ENCODE measurements at regions of chr20 and their contacts with region 1.

Region 1: DNA sequence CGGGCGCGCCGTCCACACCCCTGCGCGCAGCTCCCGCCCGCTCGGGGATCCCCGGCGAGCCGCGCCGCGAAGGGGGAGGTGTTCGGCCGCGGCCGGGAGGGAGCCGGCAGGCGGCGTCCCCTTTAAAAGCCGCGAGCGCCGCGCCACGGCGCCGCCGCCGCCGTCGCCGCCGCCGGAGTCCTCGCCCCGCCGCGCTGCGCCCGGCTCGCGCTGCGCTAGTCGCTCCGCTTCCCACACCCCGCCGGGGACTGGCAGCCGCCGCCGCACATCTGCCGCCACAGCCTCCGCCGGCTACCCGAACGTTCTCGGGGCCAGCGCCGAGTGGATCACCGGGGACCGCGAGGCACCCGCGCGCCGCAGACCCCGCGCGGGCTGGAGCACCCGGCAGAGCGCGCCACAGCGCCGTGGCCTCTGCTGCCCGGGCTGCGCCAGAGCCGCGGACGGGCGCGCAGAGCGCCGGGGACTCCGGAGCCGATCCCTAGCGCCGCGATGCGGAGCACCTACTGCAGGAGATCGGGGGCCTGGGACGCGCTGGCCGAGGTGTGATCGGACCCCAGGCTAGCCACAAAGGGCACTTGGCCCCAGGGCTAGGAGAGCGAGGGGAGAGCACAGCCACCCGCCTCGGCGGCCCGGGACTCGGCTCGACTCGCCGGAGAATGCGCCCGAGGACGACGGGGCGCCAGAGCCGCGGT is at the start of gene BMP2:
- DNase-seq: peak in 1 of 2 experiments; percentile 78
- H3K4me3 ChIP-seq: peak within 1 kb of the TSS; percentile 55 to 79 (median 72)
- H3K27ac ChIP-seq: no peak within 1 kb of the TSS
- H3K4me1 ChIP-seq: peaks cover 5 to 22% (median 14%) of the 10 kb centered on the region in 4 experiments; a peak in 6 of 7 replicates
- H3K27me3 ChIP-seq: peaks cover 3 to 36% (median 26%) of the 10 kb centered on the region in 4 experiments
- CTCF ChIP-seq: no peak
- EP300 ChIP-seq: no peak
- POLR2A ChIP-seq: no peak
- RAD21 ChIP-seq: peak in 1 of 2 experiments; percentile 14; a peak in 1 of 4 replicates
- total RNA-seq, gene BMP2: 3.6 and 4.0 TPM in 2 replicates

Region 2: GRCh38 chr20:6623989-6624388 is 143.7 kb before region 1 on chr20:
- CTCF ChIA-PET with region 1: interaction called, 17 read pairs
- POLR2A ChIA-PET with region 1: no interaction called
- DNase-seq: no peak
- H3K4me3 ChIP-seq: no peak overlapping the region
- H3K27ac ChIP-seq: no peak overlapping the region
- H3K4me1 ChIP-seq: peaks cover 0 to 3% (median 0%) of the 10 kb centered on the region in 4 experiments; a peak in 1 of 7 replicates
- H3K27me3 ChIP-seq: no peaks in the 10 kb centered on the region
- CTCF ChIP-seq: no peak
- EP300 ChIP-seq: no peak
- POLR2A ChIP-seq: no peak
- RAD21 ChIP-seq: no peak

Region 3: DNA sequence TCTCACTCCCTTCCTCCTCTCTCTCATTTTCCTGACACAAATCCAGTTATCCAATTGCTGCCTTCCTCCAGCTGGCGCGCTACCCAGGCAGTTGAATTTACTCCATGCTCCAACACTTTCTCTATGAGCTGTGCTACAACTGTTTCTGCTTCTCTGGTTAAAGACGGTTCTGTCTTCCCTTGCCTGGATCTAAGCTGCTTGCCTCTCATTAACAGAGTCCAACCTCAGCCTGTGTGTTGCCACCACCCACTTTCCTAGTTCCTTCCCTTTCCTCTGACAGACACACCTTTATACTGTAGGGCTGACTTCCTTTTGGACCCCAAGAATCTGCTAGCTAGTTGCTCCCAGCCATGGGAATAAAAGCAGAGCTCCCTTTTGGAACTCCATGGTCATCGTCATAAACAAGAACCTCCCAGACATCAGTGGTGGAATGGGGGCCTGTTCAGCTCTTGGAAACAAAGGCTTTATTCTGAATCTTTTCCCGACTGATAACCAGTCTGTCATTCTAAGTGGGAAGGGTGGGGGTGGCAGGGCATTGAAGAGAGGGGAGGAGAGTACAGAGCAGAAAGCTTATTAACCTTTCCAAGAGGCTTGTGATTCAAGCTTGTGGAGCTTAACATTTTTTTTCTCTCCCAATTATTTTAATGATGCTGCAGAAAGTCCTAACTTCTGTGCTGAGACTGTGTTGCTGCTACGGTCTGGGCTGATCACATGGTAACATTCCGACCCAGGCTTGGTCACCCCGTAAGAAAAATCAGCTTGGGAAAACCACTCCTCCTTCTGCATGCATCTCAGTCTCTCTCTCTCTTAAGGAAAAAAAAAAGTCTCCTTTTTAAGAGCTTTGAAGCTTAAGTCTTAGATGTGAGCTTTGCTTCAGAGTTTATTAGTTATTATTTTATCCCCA is 31.5 kb before region 1 on chr20:
- CTCF ChIA-PET with region 1: interaction called, 10 read pairs
- POLR2A ChIA-PET with region 1: no interaction called
- DNase-seq: no peak
- H3K4me3 ChIP-seq: no peak overlapping the region
- H3K27ac ChIP-seq: no peak overlapping the region
- H3K4me1 ChIP-seq: no peaks in the 10 kb centered on the region
- H3K27me3 ChIP-seq: no peaks in the 10 kb centered on the region
- CTCF ChIP-seq: no peak
- EP300 ChIP-seq: no peak
- POLR2A ChIP-seq: no peak
- RAD21 ChIP-seq: no peak

Region 4: GRCh38 chr20:6784767-6785166 is 17.1 kb after region 1 on chr20:
- CTCF ChIA-PET with region 1: interaction called, 11 read pairs
- POLR2A ChIA-PET with region 1: interaction called, 5 read pairs
- DNase-seq: no peak
- H3K4me3 ChIP-seq: no peak overlapping the region
- H3K27ac ChIP-seq: no peak overlapping the region
- H3K4me1 ChIP-seq: no peaks in the 10 kb centered on the region; a peak in 2 of 7 replicates
- H3K27me3 ChIP-seq: no peaks in the 10 kb centered on the region
- CTCF ChIP-seq: no peak
- EP300 ChIP-seq: no peak
- POLR2A ChIP-seq: no peak
- RAD21 ChIP-seq: no peak

Region 5: DNA sequence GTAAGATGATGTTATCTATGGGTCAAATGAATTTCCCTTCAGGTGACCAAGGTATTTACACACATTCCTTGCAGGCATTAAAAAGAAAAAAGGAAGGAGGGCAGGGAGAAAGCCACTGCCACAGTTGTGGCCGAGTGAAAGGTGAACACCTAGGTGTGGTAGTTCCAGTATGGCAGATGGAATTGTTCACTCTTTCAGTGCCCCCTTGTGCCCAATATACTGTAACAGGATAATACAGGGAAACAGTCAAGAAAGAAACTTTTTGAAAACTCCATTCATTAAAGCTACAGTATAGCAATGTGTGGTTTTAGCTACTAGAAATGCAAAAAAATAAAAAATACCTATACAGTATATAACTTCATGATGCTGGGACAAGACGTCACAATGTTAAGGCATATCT is 51.9 kb after region 1 on chr20:
- CTCF ChIA-PET with region 1: interaction called, 15 read pairs
- POLR2A ChIA-PET with region 1: interaction called, 3 read pairs
- DNase-seq: no peak
- H3K4me3 ChIP-seq: no peak overlapping the region
- H3K27ac ChIP-seq: no peak overlapping the region
- H3K4me1 ChIP-seq: peaks cover 0 to 7% (median under 1%) of the 10 kb centered on the region in 4 experiments; a peak in 3 of 7 replicates
- H3K27me3 ChIP-seq: no peaks in the 10 kb centered on the region
- CTCF ChIP-seq: peak in 2 of 3 experiments; percentile 26 to 29; a peak in 2 of 4 replicates
- EP300 ChIP-seq: no peak
- POLR2A ChIP-seq: no peak
- RAD21 ChIP-seq: peak; percentile 57 to 69

Region 6: GRCh38 chr20:7094438-7094997 is 326.8 kb after region 1 on chr20:
- CTCF ChIA-PET with region 1: interaction called, 10 read pairs
- POLR2A ChIA-PET with region 1: no interaction called
- DNase-seq: peak in 1 of 2 experiments; percentile 63
- H3K4me3 ChIP-seq: no peak overlapping the region
- H3K27ac ChIP-seq: no peak overlapping the region
- H3K4me1 ChIP-seq: no peaks in the 10 kb centered on the region
- H3K27me3 ChIP-seq: no peaks in the 10 kb centered on the region
- CTCF ChIP-seq: peak; percentile 76 to 81 (median 80)
- EP300 ChIP-seq: no peak
- POLR2A ChIP-seq: no peak
- RAD21 ChIP-seq: peak; percentile 87